Activated T-helper 2 cell treated with anti-CD3 and anti-CD28 coated beads, Interferon-gamma antibody, Interleukin-2, Interleukin-4, amounts not matched to agents 10 μg/mL and 5 μg/mL and 100 μg/mL, durations not matched to agents 14 hours and 24 hours and 36 hours (primary cell): ENCODE measurements at regions of chr5 and their contacts with region 1.

Region 1: DNA sequence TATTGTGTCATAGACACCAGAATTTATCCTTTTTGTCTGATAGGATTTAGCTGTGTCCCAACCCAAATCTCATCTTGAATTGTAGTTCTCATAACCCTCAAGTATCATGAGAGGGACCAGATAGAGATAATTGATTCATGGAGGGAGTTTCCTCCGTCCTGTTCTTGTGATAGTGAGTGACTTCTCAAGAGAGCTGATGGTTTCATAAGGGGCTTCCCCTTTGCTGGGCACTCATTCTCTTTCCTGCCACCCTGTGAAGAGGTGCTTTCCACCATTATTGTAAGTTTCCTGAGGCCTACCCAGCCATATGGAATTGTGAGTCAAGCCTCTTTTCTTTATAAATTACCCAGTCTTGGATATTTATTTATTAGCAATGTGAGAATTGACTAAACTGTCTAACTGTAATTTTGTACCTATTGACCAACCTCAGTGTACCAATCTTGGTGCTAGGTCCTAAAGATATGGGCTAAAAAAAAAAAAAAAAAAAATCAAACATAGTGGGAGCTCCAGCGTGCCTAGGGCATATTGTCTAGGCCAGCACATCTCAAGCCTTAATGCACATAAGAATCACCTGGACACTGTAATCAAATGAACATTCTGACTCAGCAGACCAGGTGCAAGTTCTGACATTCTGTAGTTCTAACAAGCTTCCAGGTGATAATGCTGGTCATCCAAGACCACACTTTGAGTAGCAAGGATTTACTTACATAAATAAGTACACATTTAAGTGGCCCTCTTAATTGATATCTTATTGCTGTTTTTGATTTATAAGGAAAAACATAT is 30.5 kb downstream of the ST8SIA4 start:
- DNase-seq: no peak
- H3K4me3 Mint-ChIP-seq: no peak overlapping the region
- H3K27ac Mint-ChIP-seq: peak overlapping the region; percentile 61
- H3K4me1 Mint-ChIP-seq: peaks cover 63% of the 10 kb centered on the region
- H3K27me3 Mint-ChIP-seq: no peaks in the 10 kb centered on the region

Region 2: DNA sequence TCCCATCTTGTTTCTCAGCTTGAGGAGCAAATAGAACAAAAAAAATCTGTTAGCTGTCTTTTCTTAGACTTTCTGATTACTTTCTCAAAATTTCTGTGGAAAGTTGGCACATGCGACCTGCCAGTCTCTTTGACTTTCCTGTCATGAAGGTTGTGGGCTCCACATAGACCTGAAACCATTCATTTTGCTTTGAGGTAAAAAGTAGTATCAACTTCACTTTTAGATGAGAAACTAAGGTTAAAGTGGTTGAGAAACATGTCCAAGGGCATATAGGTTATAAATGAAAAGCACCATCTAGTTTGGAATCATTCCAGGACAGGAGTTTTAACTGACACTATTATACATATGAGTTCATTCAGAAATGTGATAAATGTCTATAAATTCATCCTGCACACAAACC is 12.2 kb before region 1 on chr5:
- intact Hi-C with region 1: loop called (anchors 1 kb)
- DNase-seq: no peak
- H3K4me3 Mint-ChIP-seq: peak overlapping the region; percentile 64
- H3K27ac Mint-ChIP-seq: peak overlapping the region; percentile 93
- H3K4me1 Mint-ChIP-seq: peaks cover 66% of the 10 kb centered on the region
- H3K27me3 Mint-ChIP-seq: no peaks in the 10 kb centered on the region